Pancreas (tissue), 10 donors: ENCODE measurements at regions of chr3 and their contacts with region 1.

Region 1: DNA sequence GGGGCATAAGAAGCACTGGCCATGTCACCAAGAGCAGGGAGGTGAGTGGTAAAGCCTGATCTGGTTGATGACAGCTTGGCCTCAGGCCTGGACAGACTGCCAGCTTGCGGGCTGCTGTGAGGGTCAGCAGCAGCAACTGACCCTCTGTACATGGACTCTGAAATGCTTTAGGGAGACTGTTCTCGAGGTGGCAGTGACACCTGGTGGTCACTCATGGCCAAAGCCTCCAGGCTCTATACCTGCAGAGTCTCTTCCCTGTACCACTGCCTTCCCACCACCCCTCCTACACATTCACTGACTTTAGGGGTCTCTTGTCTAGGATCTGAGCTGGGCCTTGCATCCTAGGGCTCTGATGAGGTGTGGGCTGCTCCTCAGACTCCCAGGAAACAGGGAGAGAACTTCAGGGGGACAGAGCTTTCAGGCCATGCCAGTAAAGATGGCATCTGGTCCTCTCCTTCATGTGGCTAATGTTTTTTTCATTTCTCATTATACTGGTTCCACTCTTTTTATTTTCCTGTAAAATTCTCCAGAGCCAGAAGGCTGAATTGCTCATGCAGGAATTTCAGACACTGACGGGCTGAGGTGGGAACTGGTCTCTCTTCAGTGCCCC is 17.2 kb upstream of the TIMP4 start:
- DNase-seq: peak; percentile 21 to 71 (median 54)
- ATAC-seq: peak; percentile 59 to 88 (median 86)
- H3K4me3 ChIP-seq: no peak overlapping the region
- H3K27ac ChIP-seq: no peak overlapping the region
- H3K4me1 ChIP-seq: no peaks in the 10 kb centered on the region
- H3K27me3 ChIP-seq: no peaks in the 10 kb centered on the region
- CTCF ChIP-seq: peak; percentile 47 to 83 (median 66)

Region 2: GRCh38 chr3:11509173-11510000 is 666.6 kb before region 1 on chr3:
- intact Hi-C with region 1: no loop called
- DNase-seq: peak; percentile 67 to 82 (median 75)
- ATAC-seq: peak; percentile 95 to 99 (median 98)
- H3K4me3 ChIP-seq: no peak overlapping the region
- H3K27ac ChIP-seq: peak overlapping the region in 3 of 4 donors; percentile 13 to 74 (median 69)
- H3K4me1 ChIP-seq: peaks cover 13 to 22% (median 20%) of the 10 kb centered on the region in 3 donors
- H3K27me3 ChIP-seq: no peaks in the 10 kb centered on the region
- CTCF ChIP-seq: no peak

Region 3: DNA sequence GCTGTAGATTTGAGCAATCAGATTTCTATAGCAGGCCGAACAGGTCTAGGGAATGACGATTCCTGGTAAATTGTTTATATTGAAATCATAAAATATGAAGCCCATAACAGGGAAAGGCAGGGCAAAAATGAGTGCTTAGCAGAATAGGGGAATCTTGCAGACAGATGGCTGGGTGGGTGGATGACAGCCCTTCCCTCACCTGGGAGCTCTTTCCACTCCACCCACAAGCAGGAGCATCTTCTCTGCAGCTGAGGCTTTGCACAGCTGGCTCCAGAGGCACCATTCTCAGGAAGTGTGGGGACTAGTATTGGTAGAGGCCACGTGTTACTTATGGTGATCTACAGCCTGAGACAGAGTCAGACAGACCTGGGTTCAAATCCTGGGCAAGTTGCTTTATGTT is 227.6 kb before region 1 on chr3:
- intact Hi-C with region 1: loop called in 1 of 3 experiments (anchors 5 kb)
- DNase-seq: no peak
- ATAC-seq: no peak
- H3K4me3 ChIP-seq: no peak overlapping the region
- H3K27ac ChIP-seq: no peak overlapping the region
- H3K4me1 ChIP-seq: no peaks in the 10 kb centered on the region
- H3K27me3 ChIP-seq: no peaks in the 10 kb centered on the region
- CTCF ChIP-seq: no peak

Region 4: GRCh38 chr3:12255393-12255792 is 79.4 kb after region 1 on chr3:
- intact Hi-C with region 1: no loop called
- DNase-seq: no peak
- ATAC-seq: peak in 2 of 4 donors; percentile 66 to 75
- H3K4me3 ChIP-seq: no peak overlapping the region
- H3K27ac ChIP-seq: no peak overlapping the region
- H3K4me1 ChIP-seq: no peaks in the 10 kb centered on the region
- H3K27me3 ChIP-seq: no peaks in the 10 kb centered on the region
- CTCF ChIP-seq: no peak